ENCODE measurements at regions of chr5 and their contacts with region 1.

Region 1: DNA sequence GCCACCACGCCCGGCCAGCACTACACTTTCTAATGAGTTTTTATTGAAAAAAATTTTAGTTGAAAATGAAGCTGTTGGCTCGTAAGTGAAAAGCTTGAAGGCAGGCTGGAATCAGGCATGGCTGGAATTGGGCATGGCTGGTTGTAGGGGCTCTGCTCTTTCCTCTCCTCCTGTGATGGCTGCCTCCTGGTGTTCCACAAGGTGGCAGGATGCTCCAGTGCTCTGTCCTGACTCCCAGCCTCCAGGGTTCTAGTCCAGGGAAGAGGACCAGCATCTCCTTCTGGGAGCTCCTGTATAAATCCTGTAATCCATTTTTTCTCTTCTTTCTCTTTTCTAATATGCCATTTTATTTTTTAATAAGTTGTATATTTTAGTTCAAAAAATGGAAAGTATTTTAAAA is 57.2 kb upstream of the DHFR start:
- DNase-seq: peak in 1 of 10 donors; percentile 49
- H3K4me3 ChIP-seq: no peak overlapping the region
- H3K27ac ChIP-seq: no peak overlapping the region
- H3K27me3 ChIP-seq: no peaks in the 10 kb centered on the region
- CTCF ChIP-seq: peak in 54 of 56 donors; percentile 15 to 71 (median 44)

Region 2: GRCh38 chr5:80275347-80275746 is 436.6 kb before region 1 on chr5:
- intact Hi-C with region 1: no loop called
- DNase-seq: peak in 1 of 10 donors; percentile 42
- H3K4me3 ChIP-seq: no peak overlapping the region
- H3K27ac ChIP-seq: no peak overlapping the region
- H3K27me3 ChIP-seq: no peaks in the 10 kb centered on the region
- CTCF ChIP-seq: peak in 55 of 56 donors; percentile 31 to 80 (median 57)

Region 3: GRCh38 chr5:80804332-80804731 is 92.4 kb after region 1 on chr5:
- intact Hi-C with region 1: no loop called
- DNase-seq: no peak
- H3K4me3 ChIP-seq: no peak overlapping the region
- H3K27ac ChIP-seq: no peak overlapping the region
- H3K27me3 ChIP-seq: no peaks in the 10 kb centered on the region
- CTCF ChIP-seq: peak in 3 of 56 donors; percentile 15 to 27 (median 20)

Region 4: GRCh38 chr5:80975065-80975464 is 263.1 kb after region 1 on chr5:
- intact Hi-C with region 1: no loop called
- DNase-seq: no peak
- H3K4me3 ChIP-seq: peak overlapping the region in 9 of 59 donors; percentile 2 to 39 (median 15)
- H3K27ac ChIP-seq: peak overlapping the region in 47 of 59 donors; percentile 2 to 84 (median 59)
- H3K27me3 ChIP-seq: no peaks in the 10 kb centered on the region
- CTCF ChIP-seq: no peak

Region 5: DNA sequence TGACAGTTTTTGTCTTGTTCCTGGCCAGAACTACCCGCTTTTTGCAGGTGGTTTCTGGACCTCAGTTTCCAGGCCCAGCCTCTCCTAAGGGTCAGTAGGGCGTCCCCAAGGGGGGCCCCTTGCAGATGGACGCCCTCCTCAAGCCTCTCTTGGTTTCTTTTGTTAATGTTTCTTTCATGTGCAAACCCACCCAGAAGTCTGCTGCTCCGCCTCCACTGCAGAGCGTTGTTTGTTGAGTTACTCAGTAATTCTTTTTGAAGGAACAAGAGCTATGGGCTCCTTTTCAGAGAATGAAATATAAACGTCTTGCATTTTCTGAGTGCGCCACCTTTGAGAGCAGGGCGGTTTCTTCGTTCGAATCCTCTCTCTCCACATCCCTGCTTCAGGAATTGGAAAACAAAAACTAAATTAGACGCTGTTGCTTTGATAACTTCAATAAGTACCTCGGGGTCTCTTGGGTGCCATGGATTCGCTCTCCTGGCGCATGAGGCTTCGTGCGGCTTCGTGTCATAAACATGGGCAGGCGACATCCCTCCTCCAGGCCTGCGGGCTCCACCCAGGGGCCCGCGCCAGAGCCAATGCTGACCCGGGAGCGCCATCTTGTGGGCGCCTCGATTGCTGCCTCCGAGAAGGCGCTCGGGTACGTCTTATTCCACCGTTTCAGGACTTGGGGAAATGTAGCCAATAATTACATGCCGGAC is 482.8 kb after region 1 on chr5:
- intact Hi-C with region 1: loop called in 1 of 2 experiments (anchors 5 kb)
- DNase-seq: peak; percentile 76 to 89 (median 83)
- H3K4me3 ChIP-seq: peak overlapping the region in 36 of 59 donors; percentile 0 to 42 (median 20)
- H3K27ac ChIP-seq: peak overlapping the region in 25 of 59 donors; percentile 2 to 73 (median 29)
- H3K27me3 ChIP-seq: no peaks in the 10 kb centered on the region
- CTCF ChIP-seq: peak; percentile 80 to 99 (median 95)

Measured in dorsolateral prefrontal cortex (tissue), 120 donors.